ENCODE measurements at regions of chr1 and their contacts with region 1.

Region 1: DNA sequence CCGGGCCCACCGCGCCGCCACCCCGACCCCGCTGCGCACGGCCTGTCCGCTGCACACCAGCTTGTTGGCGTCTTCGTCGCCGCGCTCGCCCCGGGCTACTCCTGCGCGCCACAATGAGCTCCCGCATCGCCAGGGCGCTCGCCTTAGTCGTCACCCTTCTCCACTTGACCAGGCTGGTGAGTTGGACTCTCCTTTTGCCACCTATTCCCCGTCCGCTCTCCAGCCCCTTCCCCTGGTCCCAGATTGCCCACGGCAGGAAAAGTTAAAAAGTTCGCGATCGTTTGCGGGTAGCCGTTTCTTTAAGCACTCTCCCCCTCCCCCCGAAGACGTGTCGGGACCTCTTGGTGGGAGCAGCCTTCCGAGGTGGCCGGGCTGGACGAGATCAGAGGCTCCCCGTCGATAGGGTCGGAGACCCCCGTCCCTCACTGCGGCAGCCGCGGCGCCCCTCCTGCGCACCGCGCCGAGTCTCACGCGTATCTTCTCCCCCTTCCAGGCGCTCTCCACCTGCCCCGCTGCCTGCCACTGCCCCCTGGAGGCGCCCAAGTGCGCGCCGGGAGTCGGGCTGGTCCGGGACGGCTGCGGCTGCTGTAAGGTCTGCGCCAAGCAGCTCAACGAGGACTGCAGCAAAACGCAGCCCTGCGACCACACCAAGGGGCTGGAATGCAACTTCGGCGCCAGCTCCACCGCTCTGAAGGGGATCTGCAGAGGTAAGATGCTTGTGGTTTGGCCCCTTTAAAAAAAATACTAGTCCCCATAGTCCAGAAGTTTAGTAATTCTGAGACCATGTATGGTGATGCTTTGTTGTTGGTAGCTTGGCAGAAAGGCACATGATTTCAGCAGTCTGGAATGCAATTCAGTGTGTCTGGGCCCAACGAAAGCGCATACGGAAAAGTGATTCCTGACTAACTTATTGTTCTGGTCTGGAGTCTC is 576 bp downstream of the CCN1 start:
- DNase-seq: peak; percentile 52
- H3K4me3 ChIP-seq: peak overlapping the region; percentile 93
- H3K27ac ChIP-seq: peak overlapping the region; percentile 99
- H3K27me3 ChIP-seq: no peaks in the 10 kb centered on the region
- CTCF ChIP-seq: peak; percentile 60

Region 2: DNA sequence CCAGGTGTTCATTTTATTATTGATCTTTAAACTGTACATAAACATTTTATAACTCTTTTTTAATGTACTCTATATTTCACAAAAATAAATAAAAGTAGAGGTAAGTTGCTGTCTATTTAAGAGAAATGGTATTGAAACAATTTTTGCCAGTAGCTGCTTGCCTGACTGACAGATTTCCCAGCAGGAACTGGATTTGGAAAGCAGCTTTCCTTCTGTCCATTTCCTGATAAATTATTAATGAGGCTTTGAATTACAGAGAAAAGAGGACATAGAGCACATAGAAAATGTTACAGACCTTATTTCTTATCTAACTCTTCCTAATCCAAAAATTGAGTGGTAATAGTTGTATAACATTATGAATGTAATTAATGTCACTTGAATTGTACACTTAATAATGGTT is 225.0 kb before region 1 on chr1:
- CTCF ChIA-PET with region 1: no interaction called
- POLR2A ChIA-PET with region 1: no interaction called
- DNase-seq: no peak
- H3K4me3 ChIP-seq: no peak overlapping the region
- H3K27ac ChIP-seq: no peak overlapping the region
- H3K27me3 ChIP-seq: no peaks in the 10 kb centered on the region
- CTCF ChIP-seq: no peak

Region 3: DNA sequence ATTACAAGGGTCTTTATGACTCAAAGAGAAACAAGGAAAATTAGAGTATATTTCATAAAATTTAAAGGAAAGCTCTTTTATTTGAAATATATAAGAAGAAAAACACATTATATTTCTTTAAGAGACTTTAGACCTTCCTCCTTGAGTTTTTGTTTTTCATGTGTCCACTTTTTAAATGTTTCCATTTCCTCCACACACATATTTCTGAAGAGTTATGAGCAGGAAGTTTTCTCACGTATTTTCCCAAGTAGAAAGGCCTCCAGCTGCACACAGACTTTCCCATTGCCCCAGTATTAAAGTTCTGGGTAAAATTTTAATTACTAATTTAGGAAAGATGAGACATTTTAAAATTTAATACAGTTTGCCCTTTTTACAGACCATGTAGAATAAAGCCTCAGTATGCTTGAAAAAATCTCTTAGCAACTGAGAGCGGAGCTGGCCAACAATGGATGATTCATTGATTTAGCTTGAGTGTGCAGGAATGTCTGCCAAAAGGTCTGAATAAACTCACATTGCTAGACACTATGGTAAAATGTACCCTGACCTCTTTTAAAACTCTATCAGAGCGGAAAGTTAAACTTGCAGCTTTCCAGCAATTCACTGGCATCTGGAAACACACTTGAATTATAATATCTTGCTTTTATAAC is 174.1 kb before region 1 on chr1:
- CTCF ChIA-PET with region 1: interaction called, 3 read pairs
- POLR2A ChIA-PET with region 1: interaction called, 10 read pairs
- DNase-seq: peak; percentile 69
- H3K4me3 ChIP-seq: peak overlapping the region; percentile 17; the same call in 1 of the 2 replicates
- H3K27ac ChIP-seq: peak overlapping the region; percentile 54
- H3K27me3 ChIP-seq: no peaks in the 10 kb centered on the region
- CTCF ChIP-seq: no peak

Region 4: GRCh38 chr1:85607126-85607912 is 26.2 kb after region 1 on chr1:
- CTCF ChIA-PET with region 1: interaction called, 6 read pairs
- POLR2A ChIA-PET with region 1: interaction called, 88 read pairs
- DNase-seq: peak; percentile 99
- H3K4me3 ChIP-seq: no peak overlapping the region
- H3K27ac ChIP-seq: peak overlapping the region; percentile 99
- H3K27me3 ChIP-seq: no peaks in the 10 kb centered on the region
- CTCF ChIP-seq: no peak

Region 5: DNA sequence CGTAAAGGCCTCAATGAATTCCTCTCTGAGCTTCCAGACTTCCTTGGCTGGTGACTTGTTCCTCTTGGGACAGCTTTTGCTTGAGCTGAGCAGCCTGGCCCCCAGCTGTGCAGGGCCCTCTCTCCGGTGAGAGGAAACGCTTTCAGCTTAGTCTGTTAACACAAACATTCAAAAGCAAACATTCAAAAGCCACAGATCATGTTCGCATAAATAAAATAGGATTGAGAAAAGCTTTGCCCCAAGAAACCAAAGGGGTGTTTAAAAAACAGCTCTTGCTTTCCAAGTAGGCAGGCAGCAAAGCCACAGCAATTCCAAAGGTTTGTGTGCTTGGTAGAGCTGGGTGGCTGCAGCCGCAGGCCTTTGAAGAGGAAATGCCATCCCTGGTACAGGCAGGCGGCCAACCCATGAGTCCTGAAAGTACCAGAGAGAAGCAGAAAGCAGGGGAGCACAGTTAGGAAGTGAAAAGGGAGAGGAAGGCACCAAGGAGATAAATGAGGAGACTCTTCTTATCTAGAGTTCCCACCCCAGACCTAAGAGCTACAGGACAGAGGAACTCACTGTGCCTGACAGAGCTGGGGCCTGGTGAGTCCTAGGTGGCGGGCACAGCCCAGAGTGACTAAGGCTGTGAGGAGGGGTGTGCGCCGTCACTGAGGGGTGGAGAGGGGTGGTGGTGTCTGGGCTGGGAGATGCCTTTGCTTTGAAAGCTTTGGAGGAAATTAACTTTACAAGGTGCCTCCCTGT is 47.8 kb after region 1 on chr1:
- CTCF ChIA-PET with region 1: interaction called, 4 read pairs
- POLR2A ChIA-PET with region 1: interaction called, 47 read pairs
- DNase-seq: peak; percentile 92
- H3K4me3 ChIP-seq: peak overlapping the region; percentile 40
- H3K27ac ChIP-seq: peak overlapping the region; percentile 94
- H3K27me3 ChIP-seq: no peaks in the 10 kb centered on the region
- CTCF ChIP-seq: no peak